CD4-positive, alpha-beta memory T cell (primary cell): ENCODE measurements at regions of chr7 and their contacts with region 1.

Region 1: DNA sequence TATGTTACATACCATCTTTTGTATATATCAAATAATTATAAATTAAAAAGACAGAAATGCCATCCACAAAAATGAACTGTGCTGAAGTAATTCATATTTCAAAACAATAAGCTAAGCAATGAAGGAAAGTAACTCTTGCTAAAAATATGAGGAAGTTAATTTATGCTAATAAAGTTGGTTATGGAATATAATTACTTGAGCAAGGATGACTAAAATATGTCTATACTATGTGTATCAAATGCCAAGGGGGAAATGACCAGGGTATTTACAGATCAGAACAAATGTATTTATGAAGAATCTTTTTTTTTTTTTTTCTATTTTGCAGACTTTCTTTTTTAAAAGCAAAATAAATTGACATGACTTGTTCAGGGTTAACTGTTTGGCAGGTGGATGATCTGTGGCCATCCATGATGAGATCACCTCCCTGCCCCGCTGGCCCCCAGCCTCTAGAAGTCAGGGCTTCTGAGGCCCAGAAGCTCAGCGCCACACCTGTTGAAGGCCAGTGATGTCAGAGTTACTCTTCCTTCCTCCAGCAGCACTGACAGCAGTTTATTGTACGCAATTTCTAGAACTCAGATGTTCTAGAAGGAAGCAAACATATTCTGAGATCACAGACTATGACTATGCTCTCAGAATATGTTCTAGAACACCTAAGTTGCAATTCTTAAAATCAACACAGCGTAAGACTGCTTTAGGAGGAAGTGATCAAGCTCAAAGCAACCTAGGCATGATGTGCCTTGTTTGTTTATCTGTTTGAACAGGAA is 196.1 kb upstream of the KLF14 start:
- DNase-seq: peak; percentile 53 to 83 (median 72)
- H3K4me3 ChIP-seq: no peak overlapping the region
- H3K4me3 Mint-ChIP-seq: peak overlapping the region in 7 of 8 donors; percentile 5 to 73 (median 66)
- H3K27ac ChIP-seq: peak overlapping the region; percentile 45
- H3K27ac Mint-ChIP-seq: peak overlapping the region in 6 of 7 donors; percentile 64 to 96 (median 92)
- H3K4me1 ChIP-seq: peaks cover 100% of the 10 kb centered on the region
- H3K4me1 Mint-ChIP-seq: peaks cover 69 to 99% (median 84%) of the 10 kb centered on the region in 4 donors
- H3K27me3 ChIP-seq: no peaks in the 10 kb centered on the region
- H3K27me3 Mint-ChIP-seq: no peaks in the 10 kb centered on the region

Region 2: DNA sequence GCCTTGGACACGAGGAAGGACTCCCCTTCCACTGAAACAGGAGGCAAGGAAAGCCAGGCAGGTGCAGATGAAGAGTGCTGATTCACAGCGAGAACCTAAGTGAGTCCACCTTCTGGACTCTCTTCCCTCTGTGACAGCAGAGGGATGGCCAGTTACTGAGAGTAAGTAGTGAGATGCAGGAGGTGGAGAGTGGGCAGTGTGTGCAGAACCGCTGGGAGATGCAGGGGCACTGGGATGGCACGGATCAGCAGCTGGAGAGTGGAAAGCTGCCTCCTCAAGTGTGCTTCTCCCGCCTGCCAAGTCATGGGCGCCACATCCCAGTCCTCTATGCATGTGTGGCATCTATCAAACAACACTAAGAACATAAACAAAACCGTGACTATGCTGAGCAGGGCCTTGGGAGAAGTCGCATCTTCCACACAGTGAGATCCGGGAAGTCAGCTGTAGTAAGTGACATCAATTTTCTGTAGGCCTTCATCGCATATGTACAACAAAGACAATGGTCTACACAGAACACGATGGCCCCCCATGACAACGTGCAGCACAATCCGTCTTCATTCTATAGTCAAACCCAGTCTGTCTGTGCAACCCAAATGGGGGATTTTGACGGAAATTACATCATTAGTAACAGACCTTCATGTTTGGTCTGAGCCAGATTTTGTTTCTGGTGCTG is 21.4 kb after region 1 on chr7:
- CTCF ChIA-PET with region 1: interaction called, 8 read pairs
- POLR2A ChIA-PET with region 1: interaction called, 116 read pairs
- intact Hi-C with region 1: no loop called
- DNase-seq: peak; percentile 54 to 85 (median 61)
- H3K4me3 ChIP-seq: peak overlapping the region in 1 of 2 donors; percentile 8
- H3K4me3 Mint-ChIP-seq: no peak overlapping the region
- H3K27ac ChIP-seq: peak overlapping the region; percentile 76
- H3K27ac Mint-ChIP-seq: no peak overlapping the region
- H3K4me1 ChIP-seq: peaks cover 96% of the 10 kb centered on the region
- H3K4me1 Mint-ChIP-seq: peaks cover 20 to 59% (median 56%) of the 10 kb centered on the region in 4 donors
- H3K27me3 ChIP-seq: no peaks in the 10 kb centered on the region
- H3K27me3 Mint-ChIP-seq: no peaks in the 10 kb centered on the region

Region 3: GRCh38 chr7:131188367-131189339 is 258.6 kb after region 1 on chr7:
- CTCF ChIA-PET with region 1: no interaction called
- POLR2A ChIA-PET with region 1: no interaction called
- intact Hi-C with region 1: no loop called
- DNase-seq: peak; percentile 83 to 88 (median 84)
- H3K4me3 ChIP-seq: no peak overlapping the region
- H3K4me3 Mint-ChIP-seq: peak overlapping the region; percentile 21 to 79 (median 69)
- H3K27ac ChIP-seq: peak overlapping the region; percentile 54
- H3K27ac Mint-ChIP-seq: peak overlapping the region; percentile 89 to 98 (median 95)
- H3K4me1 ChIP-seq: peaks cover 40% of the 10 kb centered on the region
- H3K4me1 Mint-ChIP-seq: peaks cover 26 to 43% (median 30%) of the 10 kb centered on the region in 4 donors
- H3K27me3 ChIP-seq: no peaks in the 10 kb centered on the region
- H3K27me3 Mint-ChIP-seq: peaks cover 0 to 2% of the 10 kb centered on the region in 2 donors